Pancreas (tissue), 10 donors: ENCODE measurements at regions of chr10 and their contacts with region 1.

Region 1: GRCh38 chr10:128150045-128150493 is 23.8 kb upstream of the MKI67 start:
- DNase-seq: peak; percentile 24 to 88 (median 52)
- ATAC-seq: peak; percentile 90 to 100 (median 97)
- H3K4me3 ChIP-seq: peak overlapping the region in 1 of 4 donors; percentile 44
- H3K27ac ChIP-seq: no peak overlapping the region
- H3K4me1 ChIP-seq: no peaks in the 10 kb centered on the region
- H3K27me3 ChIP-seq: no peaks in the 10 kb centered on the region
- CTCF ChIP-seq: peak; percentile 59 to 77 (median 69)

Region 2: DNA sequence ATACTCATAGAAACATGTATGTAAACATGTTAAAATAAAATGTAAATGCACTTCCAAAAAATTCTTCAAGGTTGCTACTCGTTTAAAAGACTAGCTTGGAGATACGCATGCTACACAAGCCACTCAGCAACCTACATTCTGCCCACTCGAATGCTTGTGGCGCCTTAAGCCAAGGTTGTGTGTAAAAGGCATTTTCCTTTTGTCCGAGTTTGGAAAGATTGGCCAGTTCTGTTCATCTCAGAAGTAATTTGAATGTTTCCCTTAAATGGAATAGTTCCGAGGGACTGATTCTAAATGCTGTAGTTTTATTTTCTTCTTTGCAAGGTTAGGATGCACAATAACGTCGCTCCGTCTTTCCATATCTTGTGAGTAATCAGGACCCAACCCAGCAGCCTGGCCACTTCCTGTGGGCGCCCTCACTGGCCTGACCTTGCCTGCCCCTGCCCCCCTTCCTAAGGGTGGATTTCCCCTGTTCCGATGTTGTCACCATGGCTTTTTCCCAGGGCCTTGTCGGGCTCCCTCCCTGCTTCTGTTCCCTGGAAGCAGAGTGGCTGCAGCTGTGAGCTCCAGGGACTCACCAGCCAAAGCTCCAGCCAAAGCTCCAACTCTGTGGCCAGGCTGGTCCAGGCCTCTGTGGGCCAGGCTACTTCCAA is 172.6 kb before region 1 on chr10:
- intact Hi-C with region 1: no loop called
- DNase-seq: peak in 4 of 6 donors; percentile 33 to 56 (median 37)
- ATAC-seq: peak; percentile 48 to 90 (median 79)
- H3K4me3 ChIP-seq: no peak overlapping the region
- H3K27ac ChIP-seq: peak overlapping the region in 1 of 4 donors; percentile 2
- H3K4me1 ChIP-seq: no peaks in the 10 kb centered on the region
- H3K27me3 ChIP-seq: peaks cover 0 to 8% (median 0%) of the 10 kb centered on the region in 4 donors
- CTCF ChIP-seq: no peak

Region 3: GRCh38 chr10:128069351-128070051 is 80.6 kb before region 1 on chr10:
- intact Hi-C with region 1: loop called in 1 of 3 experiments (anchors 10 kb)
- DNase-seq: peak in 5 of 6 donors; percentile 52 to 88 (median 74)
- ATAC-seq: peak; percentile 70 to 88 (median 78)
- H3K4me3 ChIP-seq: no peak overlapping the region
- H3K27ac ChIP-seq: no peak overlapping the region
- H3K4me1 ChIP-seq: no peaks in the 10 kb centered on the region
- H3K27me3 ChIP-seq: no peaks in the 10 kb centered on the region
- CTCF ChIP-seq: peak; percentile 76 to 81 (median 80)

Region 4: GRCh38 chr10:128087884-128088709 is 62.0 kb before region 1 on chr10:
- intact Hi-C with region 1: loop called in 1 of 3 experiments (anchors 10 kb)
- DNase-seq: no peak
- ATAC-seq: peak in 1 of 4 donors; percentile 34
- H3K4me3 ChIP-seq: no peak overlapping the region
- H3K27ac ChIP-seq: no peak overlapping the region
- H3K4me1 ChIP-seq: no peaks in the 10 kb centered on the region
- H3K27me3 ChIP-seq: no peaks in the 10 kb centered on the region
- CTCF ChIP-seq: no peak

Region 5: DNA sequence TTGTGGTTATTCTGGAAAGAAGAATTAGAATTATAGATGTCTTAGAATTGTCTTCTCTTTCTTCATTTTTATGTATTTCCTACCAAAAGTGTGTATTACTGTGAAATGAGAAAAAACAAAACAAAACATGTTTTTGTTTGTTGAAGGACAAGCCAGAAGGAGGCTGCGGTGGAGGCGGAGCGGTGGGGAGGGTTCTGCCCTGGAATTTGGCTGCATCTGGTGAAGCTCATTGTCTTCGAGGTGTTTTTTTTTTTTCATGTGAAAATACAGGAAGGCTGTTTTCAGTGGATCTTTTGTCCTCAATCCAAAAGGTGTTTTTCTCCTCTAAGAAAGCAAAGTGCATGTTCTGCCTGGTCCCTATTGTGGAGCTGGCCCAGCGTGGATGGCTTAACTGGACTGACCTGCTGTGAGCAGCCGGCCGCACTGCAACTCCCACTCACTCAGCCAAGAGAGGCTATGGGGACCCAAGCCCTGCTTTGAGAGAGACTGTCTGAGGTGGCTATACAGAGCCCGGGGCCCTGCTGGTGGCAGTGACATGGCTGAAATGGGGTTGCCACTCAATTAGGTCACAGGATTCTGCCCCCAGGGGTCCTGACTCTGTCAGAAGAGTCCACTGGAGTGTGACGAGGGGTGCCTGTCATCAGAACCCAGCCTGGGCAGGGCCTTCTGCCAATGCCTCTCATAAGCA is 161.0 kb after region 1 on chr10:
- intact Hi-C with region 1: no loop called
- DNase-seq: no peak
- ATAC-seq: no peak
- H3K4me3 ChIP-seq: no peak overlapping the region
- H3K27ac ChIP-seq: no peak overlapping the region
- H3K4me1 ChIP-seq: no peaks in the 10 kb centered on the region
- H3K27me3 ChIP-seq: peaks cover 0 to 3% (median 0%) of the 10 kb centered on the region in 4 donors
- CTCF ChIP-seq: no peak